Right ventricle myocardium inferior (tissue), 1 donor: ENCODE measurements at regions of chr11 and their contacts with region 1.

Region 1: DNA sequence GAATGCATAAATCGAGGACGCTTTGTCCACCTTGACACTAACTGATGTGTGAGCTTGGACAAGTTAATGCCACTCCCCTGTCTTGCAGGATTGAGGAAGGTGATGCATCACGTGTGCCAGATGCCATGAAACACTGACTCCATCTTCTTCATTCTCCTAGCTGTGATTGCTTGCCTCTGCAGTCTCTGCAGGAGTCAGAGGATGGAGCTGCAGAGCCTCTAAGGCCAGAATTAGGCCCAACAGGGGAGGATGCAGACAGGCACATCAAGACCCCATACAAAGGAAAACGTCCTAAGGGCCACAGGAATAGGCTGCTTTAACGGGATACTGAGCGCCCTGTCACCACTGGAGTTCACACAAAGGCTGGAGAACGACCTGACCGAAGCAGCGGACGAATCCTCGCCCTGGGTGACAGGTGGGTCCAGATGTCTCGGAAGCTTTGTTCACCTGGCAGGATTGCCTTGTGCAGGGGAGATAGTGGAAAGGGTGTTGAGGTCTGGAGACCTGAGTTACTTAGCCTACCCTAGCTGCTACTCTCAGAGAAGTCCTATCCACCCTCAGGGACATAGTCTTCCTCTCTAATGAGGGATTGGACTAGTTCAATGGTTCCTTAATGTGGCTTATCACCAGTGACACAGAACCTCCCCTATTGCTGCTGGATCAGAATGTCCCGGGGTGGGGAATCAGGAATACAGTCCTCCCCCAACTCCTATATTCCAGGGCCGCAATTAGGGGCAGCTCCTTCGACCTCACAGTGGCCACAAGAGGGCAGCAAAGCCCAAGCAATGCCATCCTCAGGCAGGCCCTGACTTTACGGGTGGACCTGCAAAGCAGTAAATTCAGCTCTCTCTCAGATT is 32.4 kb downstream of the DBX1 start:
- DNase-seq: peak; percentile 82
- ATAC-seq: peak; percentile 68

Region 2: GRCh38 chr11:19938169-19938856 is 189.6 kb before region 1 on chr11:
- intact Hi-C with region 1: loop called (anchors 5 kb)
- DNase-seq: no peak
- ATAC-seq: peak; percentile 31

Region 3: DNA sequence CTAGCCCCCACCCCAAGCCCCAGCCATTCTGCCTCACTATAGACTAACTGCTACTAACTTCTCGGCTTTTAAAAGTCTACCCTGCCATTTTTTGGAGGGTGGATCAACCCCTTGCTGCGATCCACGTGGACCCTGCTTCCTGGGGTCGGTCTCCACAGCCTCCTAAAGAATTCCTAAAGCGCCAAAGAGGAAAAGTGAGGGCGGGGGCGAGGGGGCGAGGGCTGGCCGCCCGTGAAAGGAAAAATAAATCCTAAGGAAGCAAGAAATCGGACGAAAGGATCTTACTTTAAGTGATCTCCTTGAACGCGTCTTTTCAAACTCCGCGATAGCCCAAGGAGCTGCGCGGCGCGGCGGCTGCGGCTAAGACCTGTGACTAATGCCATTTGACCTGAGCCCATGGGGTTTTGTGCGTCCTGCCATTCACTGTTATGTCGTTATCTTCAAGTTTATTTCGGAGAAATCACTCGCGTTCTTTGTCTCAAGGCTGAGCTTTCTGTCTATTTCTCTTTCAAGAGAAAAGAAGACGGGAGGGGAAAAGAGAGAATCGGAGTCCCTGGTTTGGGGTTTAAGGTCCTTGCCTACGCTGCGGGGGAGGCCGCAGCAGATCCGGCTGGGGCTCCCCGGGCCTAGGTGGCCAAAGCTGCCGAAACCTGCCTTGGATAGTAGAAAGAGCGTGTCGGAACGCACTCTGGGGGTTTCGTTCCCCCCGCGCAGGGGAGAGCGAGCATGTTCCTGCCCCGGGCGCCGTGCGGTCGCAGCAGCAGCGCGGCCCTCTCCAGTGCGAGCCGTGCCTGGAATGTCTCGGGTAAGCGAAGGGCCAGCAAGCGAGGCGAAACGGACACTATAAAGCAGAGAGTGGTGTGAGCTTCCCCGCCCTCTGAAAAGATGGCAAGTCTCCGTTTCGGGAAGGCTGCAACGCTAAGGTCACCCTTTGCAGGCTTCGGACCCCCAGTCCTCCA is 35.2 kb after region 1 on chr11:
- intact Hi-C with region 1: no loop called
- DNase-seq: no peak
- ATAC-seq: no peak

Region 4: GRCh38 chr11:20243974-20244373 is 116.1 kb after region 1 on chr11:
- intact Hi-C with region 1: no loop called
- DNase-seq: no peak
- ATAC-seq: no peak